ENCODE measurements at regions of chr1 and their contacts with region 1.

Region 1: GRCh38 chr1:98384461-98385141 is 276.9 kb upstream of the SNX7 start:
- DNase-seq: no peak
- H3K4me3 ChIP-seq: no peak overlapping the region
- CTCF ChIP-seq: no peak
- POLR2A ChIP-seq: no peak

Region 2: GRCh38 chr1:97281962-97282361 is 1102.6 kb before region 1 on chr1:
- intact Hi-C with region 1: loop called (anchors 5 kb)
- DNase-seq: no peak
- H3K4me3 ChIP-seq: no peak overlapping the region
- CTCF ChIP-seq: no peak
- POLR2A ChIP-seq: no peak

Region 3: DNA sequence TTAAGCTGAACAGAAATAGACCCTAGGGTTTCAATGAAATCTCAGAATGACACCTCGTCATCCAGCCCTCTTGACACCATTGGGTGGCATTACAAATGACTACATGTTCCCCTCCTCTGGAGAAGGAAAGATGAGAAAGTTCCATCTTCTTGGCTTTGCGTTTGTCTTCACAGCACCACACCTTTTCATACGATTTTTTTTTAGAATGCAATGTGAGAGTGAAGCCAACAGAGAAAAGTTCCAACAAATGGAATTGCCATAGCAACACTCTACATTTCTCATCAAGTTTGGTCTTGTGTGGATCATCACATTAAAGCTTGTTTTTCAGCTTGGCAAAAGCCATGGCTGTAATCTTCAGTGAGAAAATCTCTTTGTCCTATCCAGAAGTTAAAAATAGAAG is 93.5 kb after region 1 on chr1:
- intact Hi-C with region 1: loop called (anchors 5 kb)
- DNase-seq: no peak
- H3K4me3 ChIP-seq: no peak overlapping the region
- CTCF ChIP-seq: no peak
- POLR2A ChIP-seq: no peak

Region 4: GRCh38 chr1:98704474-98704873 is 319.9 kb after region 1 on chr1:
- intact Hi-C with region 1: no loop called
- DNase-seq: no peak
- H3K4me3 ChIP-seq: no peak overlapping the region
- CTCF ChIP-seq: no peak
- POLR2A ChIP-seq: no peak